Common myeloid progenitor, CD34-positive (primary cell): ENCODE measurements at regions of chr19 and their contacts with region 1.

Region 1: DNA sequence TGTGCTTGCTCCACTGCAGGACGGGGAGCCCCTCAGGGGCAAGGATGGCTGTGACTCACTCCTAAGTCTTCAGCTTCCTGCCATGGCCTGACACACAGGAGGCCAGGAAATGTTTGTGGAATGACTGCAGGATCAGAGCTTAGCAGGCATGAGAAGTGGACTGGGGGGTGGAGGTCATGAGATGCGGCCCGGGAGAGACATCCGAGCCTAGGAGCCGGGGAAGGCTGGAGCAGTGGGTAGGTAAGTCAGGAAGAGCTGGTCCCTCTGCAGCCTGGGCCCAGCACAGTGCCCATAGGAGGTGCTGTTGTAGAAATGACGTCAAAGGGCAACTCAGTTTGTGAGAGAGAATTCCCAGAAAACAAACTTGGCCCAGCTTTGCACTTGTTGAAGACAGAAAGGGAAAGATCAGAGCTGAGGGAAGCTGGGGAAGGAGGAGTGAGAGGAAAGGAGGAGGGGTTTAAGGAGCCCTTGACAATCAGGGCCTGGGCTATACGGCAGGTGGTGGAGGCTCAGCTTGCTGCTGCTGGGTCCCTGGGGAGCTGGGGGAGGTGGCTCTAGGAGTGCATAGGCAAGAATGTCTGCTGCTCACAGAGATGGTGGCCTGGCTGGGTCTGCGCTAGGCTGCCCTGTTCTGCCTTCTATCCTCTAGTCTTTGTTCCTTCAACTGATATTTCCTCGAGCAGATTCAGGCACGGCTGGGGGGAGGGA is 18.5 kb downstream of the POU2F2 start:
- DNase-seq: no peak
- H3K4me3 ChIP-seq: no peak overlapping the region
- H3K27ac ChIP-seq: no peak overlapping the region
- H3K4me1 ChIP-seq: peaks cover 0 to 12% (median 3%) of the 10 kb centered on the region in 4 experiments
- H3K27me3 ChIP-seq: no peaks in the 10 kb centered on the region

Region 2: GRCh38 chr19:41993612-41994483 is 119.9 kb before region 1 on chr19 and contains the start of gene ATP1A3:
- CTCF ChIA-PET with region 1: no interaction called
- POLR2A ChIA-PET with region 1: no interaction called
- DNase-seq: peak; percentile 52 to 79 (median 75)
- H3K4me3 ChIP-seq: peak within 1 kb of the TSS; percentile 38 to 75 (median 57)
- H3K27ac ChIP-seq: no peak within 1 kb of the TSS
- H3K4me1 ChIP-seq: peaks cover 0 to 26% (median 24%) of the 10 kb centered on the region in 4 experiments
- H3K27me3 ChIP-seq: peaks cover 0 to 54% (median 32%) of the 10 kb centered on the region in 5 experiments

Region 3: DNA sequence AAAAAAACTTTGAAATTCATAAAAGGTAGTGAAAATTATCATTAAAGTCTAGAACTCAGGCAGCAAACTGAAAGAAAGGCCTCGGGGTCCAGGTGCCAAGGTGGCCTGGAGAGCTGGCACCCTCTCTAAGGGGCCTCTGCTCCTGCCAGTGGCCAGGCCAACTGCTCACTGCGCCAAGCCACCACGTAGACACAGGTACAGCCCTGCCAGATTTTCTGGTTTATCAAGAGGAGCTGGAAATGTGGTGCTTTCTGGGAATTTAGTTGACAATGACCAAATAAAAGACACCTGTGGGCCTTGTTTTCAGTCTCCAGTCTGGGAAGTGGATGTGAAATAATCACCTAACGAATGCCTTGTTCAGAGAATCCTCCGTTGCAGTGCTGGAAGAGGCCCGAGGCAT is 15.0 kb before region 1 on chr19:
- CTCF ChIA-PET with region 1: interaction called, 25 read pairs
- POLR2A ChIA-PET with region 1: no interaction called
- DNase-seq: no peak
- H3K4me3 ChIP-seq: no peak overlapping the region
- H3K27ac ChIP-seq: no peak overlapping the region
- H3K4me1 ChIP-seq: no peaks in the 10 kb centered on the region
- H3K27me3 ChIP-seq: no peaks in the 10 kb centered on the region